PC-9 (cell line): ENCODE measurements at regions of chr19 and their contacts with region 1.

Region 1: DNA sequence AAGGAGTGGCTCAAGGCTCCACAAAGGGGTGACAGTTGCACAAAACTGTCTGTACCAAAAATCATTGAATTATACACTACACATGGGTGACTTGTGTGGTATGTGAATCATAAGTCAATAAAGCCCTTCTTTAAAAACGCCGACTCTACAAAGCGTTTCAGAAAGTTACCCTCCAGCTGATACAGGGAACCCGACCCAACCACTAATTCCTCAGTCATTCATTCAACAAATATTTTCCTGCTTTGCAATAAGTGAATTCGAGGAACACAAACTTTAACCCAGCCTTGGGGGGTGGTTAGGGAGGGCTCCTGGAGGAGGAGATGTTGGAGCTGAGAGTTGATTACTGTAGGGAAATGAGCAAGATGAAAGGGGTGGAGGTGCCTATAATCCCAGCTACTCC is 32.0 kb downstream of the LTBP4 start:
- DNase-seq: peak in 1 of 2 experiments; percentile 45
- H3K4me3 ChIP-seq: no peak overlapping the region
- H3K27ac ChIP-seq: no peak overlapping the region
- H3K4me1 ChIP-seq: no peaks in the 10 kb centered on the region
- H3K27me3 ChIP-seq: no peaks in the 10 kb centered on the region
- CTCF ChIP-seq: no peak

Region 2: GRCh38 chr19:40101813-40102212 is 531.4 kb before region 1 on chr19:
- CTCF ChIA-PET with region 1: interaction called, 12 read pairs
- POLR2A ChIA-PET with region 1: no interaction called
- intact Hi-C with region 1: no loop called
- DNase-seq: no peak
- H3K4me3 ChIP-seq: no peak overlapping the region
- H3K27ac ChIP-seq: no peak overlapping the region
- H3K4me1 ChIP-seq: no peaks in the 10 kb centered on the region
- H3K27me3 ChIP-seq: peaks cover 11% of the 10 kb centered on the region; the same call in 1 of the 2 replicates
- CTCF ChIP-seq: no peak

Region 3: DNA sequence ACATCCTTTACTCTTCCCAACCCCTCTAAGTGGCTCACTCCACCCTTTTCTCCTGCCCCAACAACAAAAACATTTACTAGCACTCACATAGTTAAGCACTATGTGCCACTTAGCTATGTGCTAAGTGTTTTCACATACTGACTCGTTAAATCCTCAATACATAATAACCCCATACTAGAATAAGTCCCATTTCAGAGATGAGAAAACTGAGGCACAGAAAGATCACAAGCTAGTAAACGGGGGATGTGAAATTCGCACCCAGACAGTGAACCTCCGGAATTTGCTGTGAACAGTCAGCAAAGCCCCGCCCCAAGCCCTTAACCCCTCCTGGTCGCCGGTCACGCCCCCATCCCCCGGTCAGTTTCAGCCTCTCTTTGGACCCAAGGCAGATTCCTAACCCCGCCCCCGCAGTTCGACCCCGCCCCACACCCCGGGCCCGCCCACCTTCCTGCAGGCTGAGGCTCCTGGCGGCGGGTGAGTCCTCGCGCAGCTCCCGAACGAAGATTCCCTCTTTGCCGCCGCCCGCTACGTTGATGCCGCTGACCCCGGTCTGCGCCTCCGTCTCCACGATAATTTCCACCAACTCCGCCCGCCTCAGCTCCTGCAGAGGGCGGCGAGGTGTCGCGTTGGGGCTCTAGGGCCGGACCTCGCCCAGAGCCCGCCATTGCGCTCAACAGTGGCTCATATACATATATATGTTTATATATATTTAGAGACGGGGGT is 229.8 kb before region 1 on chr19:
- CTCF ChIA-PET with region 1: no interaction called
- POLR2A ChIA-PET with region 1: interaction called, 26 read pairs
- intact Hi-C with region 1: no loop called
- DNase-seq: peak; percentile 69 to 96
- H3K4me3 ChIP-seq: peak overlapping the region; percentile 90
- H3K27ac ChIP-seq: 0 out of 2 replicates have a peak overlapping the region, but pooled peaks have one; percentile 23
- H3K4me1 ChIP-seq: peaks cover 4% of the 10 kb centered on the region
- H3K27me3 ChIP-seq: no peaks in the 10 kb centered on the region
- CTCF ChIP-seq: no peak

Region 4: DNA sequence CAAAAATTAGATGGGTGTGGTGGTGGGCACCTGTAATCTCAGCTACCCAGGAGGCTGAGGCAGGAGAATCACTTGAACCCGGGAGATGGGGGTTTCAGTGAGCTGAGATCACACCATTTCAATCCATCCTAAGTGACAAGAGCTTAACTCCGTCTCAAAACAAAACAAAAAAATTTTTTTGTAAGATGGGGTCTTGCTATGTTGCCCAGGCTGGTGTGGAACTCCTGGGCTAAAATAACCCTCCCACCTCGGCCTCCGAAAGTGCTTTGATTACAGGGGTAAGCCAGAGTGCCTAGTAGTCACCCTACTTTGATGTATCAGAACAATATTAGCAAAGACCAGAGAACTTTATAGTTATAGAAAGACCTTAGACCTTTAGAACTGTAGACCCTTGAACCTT is 158.5 kb before region 1 on chr19:
- CTCF ChIA-PET with region 1: no interaction called
- POLR2A ChIA-PET with region 1: no interaction called
- intact Hi-C with region 1: no loop called
- DNase-seq: no peak
- H3K4me3 ChIP-seq: no peak overlapping the region
- H3K27ac ChIP-seq: no peak overlapping the region
- H3K4me1 ChIP-seq: no peaks in the 10 kb centered on the region
- H3K27me3 ChIP-seq: no peaks in the 10 kb centered on the region
- CTCF ChIP-seq: no peak

Region 5: DNA sequence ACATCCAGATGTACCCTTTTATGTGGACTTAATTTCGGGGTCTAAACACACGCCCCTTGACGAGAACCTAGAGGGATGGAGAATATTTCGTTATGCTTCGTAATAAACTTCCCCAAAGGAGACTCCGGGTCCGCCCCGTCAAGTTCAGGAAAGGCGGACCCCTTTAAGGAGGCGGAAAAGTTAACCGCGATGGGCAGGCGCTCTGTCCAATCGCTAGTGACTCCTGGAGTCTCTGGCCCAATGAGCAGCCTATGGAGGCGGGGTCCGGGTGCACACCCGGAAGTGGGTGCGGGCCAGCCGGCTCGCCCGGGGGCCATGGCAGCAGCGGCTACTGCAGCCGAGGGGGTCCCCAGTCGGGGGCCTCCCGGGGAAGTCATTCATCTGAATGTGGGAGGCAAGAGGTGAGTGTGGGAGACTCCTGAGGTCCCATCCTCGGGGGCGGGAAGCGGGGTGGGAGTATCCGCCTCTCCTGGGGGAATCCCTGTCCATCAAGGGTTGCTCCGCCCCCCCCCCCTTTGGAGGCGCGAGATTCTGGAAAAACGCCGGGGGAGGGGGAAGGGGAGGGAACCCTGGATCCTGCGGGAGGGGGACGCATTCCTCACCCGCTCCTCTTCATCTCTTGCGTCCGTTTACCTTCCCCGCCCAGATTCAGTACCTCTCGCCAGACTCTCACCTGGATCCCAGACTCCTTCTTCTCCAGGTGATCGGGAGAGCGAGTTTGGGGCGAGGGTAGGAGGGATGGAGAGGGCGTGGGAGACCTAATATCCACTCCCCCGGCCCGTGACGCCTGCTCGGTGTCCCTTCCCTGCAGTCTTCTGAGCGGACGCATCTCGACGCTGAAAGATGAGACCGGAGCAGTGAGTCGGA is 56.4 kb before region 1 on chr19 and contains the start of gene SHKBP1:
- CTCF ChIA-PET with region 1: interaction called, 10 read pairs
- POLR2A ChIA-PET with region 1: no interaction called
- intact Hi-C with region 1: no loop called
- DNase-seq: peak; percentile 83 to 95
- H3K4me3 ChIP-seq: peak within 1 kb of the TSS; percentile 76
- H3K27ac ChIP-seq: no peak within 1 kb of the TSS
- H3K4me1 ChIP-seq: 0 out of 2 replicates have a peak, but pooled peaks cover 5% of the 10 kb centered on the region
- H3K27me3 ChIP-seq: no peaks in the 10 kb centered on the region
- CTCF ChIP-seq: no peak
- total RNA-seq, gene SHKBP1: 90.1 and 93.7 TPM in 2 replicates

Region 6: GRCh38 chr19:40744554-40745401 is 111.6 kb after region 1 on chr19:
- CTCF ChIA-PET with region 1: no interaction called
- POLR2A ChIA-PET with region 1: no interaction called
- intact Hi-C with region 1: no loop called
- DNase-seq: no peak
- H3K4me3 ChIP-seq: no peak overlapping the region
- H3K27ac ChIP-seq: no peak overlapping the region
- H3K4me1 ChIP-seq: peaks cover 22% of the 10 kb centered on the region
- H3K27me3 ChIP-seq: no peaks in the 10 kb centered on the region
- CTCF ChIP-seq: no peak

Region 7: DNA sequence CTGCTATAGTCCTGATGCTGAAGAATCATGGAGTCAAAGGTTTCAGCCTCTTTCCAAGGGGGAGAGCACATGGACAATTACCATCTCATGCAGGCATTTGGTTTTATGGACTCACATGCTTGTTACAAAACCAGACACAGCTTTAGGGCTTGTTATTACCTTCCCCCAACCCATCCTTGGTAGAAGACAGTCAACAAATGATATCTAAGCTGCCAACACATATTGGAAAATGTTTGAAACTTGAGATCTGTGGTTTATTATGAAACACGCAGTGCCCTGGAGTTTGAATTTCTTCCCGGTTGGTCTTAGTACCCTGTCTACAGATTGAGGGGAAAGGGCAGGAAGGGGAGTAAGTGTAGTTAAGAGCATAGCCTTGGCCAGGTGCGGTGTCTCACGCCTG is 229.6 kb after region 1 on chr19:
- CTCF ChIA-PET with region 1: no interaction called
- POLR2A ChIA-PET with region 1: no interaction called
- intact Hi-C with region 1: no loop called
- DNase-seq: peak; percentile 5 to 96
- H3K4me3 ChIP-seq: no peak overlapping the region
- H3K27ac ChIP-seq: peak overlapping the region; percentile 50
- H3K4me1 ChIP-seq: peaks cover 32% of the 10 kb centered on the region
- H3K27me3 ChIP-seq: no peaks in the 10 kb centered on the region
- CTCF ChIP-seq: no peak

Region 8: DNA sequence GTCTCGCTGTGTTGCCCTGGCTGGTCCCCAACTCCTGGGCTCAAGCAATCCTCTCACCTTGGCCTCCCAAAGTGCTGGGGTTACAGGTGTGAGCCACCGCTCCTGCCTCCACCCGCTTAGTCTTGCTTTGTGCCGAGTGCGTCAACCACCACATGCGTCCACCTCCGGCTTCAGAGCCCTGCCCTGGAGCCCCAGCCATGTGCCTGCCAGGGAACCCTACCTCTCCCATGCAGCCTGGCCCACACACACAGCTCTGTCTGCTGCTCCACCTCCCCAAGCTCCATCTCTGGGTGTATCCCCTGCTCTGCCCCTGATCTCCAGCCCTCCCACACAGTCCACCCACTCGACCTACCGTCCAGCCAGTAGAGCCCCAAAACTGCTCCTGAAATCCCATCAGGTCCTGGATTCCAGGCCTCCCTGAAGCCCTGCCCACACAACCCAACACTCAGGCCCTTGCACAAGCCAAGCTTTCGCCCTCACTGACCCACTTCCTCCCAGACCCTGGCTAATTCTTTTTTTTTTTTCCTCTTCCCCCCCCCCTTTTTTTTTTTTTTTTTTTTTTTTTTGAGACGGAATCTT is 490.6 kb after region 1 on chr19:
- CTCF ChIA-PET with region 1: interaction called, 10 read pairs
- POLR2A ChIA-PET with region 1: no interaction called
- intact Hi-C with region 1: no loop called
- DNase-seq: no peak
- H3K4me3 ChIP-seq: no peak overlapping the region
- H3K27ac ChIP-seq: no peak overlapping the region
- H3K4me1 ChIP-seq: no peaks in the 10 kb centered on the region; the same call in 1 of the 2 replicates
- H3K27me3 ChIP-seq: no peaks in the 10 kb centered on the region
- CTCF ChIP-seq: no peak